ENCODE measurements at regions of chr2 and their contacts with region 1.

Region 1: DNA sequence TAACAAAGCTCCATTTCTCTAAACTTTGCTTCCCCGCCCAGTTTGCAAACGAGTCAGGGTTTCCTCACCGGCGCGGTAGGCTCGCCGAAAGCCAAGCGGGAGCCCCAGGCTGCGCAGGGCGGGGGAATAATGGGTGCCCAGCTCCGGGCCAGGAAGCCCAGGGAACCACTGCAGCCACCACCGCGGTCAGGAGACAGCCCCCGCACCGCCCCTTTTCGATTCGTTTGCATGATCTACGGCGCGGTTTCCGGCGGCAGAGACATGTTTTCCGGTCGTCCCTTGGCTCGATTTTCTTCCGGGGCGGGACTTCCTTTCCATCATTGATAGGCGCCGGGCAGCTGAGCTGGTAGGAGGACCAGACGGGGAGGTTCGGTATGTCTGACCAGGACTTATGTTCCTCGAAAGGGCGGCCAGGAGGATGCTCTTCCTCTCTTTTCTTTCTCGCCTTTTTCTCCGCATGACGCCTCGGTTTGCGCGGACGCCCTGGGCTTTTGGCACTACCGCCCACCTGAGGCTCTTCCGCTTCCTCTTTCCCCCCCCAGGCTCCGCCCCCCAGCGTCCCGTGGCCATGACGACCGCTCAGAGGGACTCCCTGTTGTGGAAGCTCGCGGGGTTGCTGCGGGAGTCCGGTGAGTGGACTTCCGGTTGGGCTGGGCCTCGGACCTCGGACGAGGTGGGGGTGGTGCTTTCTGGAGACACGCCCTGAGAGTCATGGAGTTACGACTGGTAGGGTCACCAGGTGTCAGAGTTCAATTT is at the start of gene STK11IP:
- DNase-seq: peak; percentile 96 to 98 (median 97)
- ATAC-seq: peak; percentile 97 to 99 (median 98)
- H3K4me3 ChIP-seq: peak within 1 kb of the TSS; percentile 33 to 80 (median 68)
- H3K27ac ChIP-seq: peak within 1 kb of the TSS; percentile 85 to 97 (median 94)
- H3K4me1 ChIP-seq: peaks cover 0 to 20% (median 13%) of the 10 kb centered on the region in 12 donors
- H3K27me3 ChIP-seq: no peaks in the 10 kb centered on the region
- CTCF ChIP-seq: no peak
- POLR2A ChIP-seq: peak in 1 of 2 donors; percentile 72
- total RNA-seq, gene STK11IP: 7.3 to 24.1 (median 13.9) TPM

Region 2: DNA sequence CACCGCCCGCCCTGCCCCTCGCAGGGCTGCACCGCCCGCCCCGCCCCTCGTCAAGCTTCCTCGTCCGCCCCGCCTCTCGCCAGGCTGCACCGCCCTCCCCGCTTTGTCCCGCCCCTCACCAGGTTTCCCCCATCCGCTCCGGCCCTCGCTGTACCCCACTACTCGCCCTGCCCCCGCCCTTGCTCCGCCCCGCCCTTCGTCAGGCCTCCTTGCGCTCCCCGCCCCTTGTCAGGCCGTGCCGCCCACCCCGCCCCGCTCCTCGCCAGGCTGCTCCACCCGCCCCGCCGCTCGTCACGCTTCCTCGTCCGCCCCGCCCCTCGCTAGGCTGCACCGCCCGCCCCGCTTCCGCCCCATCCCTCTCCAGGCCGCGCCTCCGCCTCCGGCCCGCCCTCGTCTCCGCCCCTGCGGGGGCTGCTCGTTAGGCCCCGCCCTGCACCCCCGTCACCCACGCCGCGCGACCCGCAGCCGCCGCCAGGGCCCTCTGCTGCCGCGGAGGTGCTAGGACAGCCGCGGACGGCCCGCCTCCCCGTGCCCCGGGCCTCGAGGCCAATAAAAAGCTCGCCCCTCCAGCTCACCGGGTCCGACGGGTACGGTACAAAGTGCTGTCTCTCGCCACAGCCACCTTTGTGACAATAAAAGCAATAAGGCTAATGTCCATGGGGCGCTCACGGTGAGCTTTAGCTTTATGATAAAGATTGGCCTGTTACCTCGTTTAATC is 209.4 kb before region 1 on chr2:
- intact Hi-C with region 1: loop called in 1 of 10 experiments (anchors 5 kb)
- DNase-seq: peak; percentile 99 to 100 (median 99)
- ATAC-seq: peak; percentile 83 to 92 (median 88)
- H3K4me3 ChIP-seq: peak overlapping the region in 10 of 12 donors; percentile 20 to 95 (median 78)
- H3K27ac ChIP-seq: peak overlapping the region; percentile 77 to 99 (median 89)
- H3K4me1 ChIP-seq: peaks cover 0 to 19% (median 11%) of the 10 kb centered on the region in 12 donors
- H3K27me3 ChIP-seq: no peaks in the 10 kb centered on the region
- CTCF ChIP-seq: peak; percentile 40 to 87 (median 74)
- POLR2A ChIP-seq: peak in 1 of 2 donors; percentile 40

Region 3: DNA sequence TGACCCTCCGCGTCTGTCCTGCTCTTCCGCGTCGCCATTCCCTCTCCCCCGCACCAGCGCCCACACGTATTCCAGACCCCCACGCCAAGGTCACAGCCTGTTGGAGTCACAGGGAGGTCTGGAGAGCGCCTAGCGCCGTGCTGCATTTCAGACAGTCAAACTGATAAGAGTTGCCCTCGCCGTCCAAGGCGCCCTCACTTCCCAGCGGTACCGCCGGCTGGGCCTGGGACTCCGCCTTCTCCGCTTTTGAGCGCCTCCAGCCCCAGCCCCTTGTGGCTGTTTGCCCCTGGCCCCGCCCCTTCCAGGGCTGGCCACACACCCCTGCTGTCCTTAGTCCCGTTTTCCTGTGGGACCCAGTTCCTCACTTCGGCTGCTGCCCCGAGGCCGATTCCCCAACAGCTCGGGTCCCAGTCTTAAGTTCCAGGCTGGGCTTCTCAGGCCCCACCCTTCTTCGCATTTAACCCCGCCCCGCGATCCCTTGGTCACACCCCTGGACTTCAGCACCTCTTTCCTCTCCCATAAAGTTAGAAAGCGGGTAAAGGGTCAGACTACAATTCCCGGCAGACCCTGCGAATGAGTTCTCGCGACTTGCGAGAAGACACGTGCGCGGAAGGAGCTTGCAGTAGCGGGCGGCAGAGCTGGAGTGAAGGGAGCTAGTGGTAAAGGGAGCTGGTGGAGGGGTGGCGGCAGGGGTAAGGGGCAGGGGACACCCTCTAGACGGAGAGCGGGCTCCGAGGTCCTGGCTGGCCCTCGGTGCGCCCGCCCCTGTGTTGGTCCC is 99.3 kb before region 1 on chr2 and contains the start of gene GMPPA:
- intact Hi-C with region 1: loop called in 1 of 10 experiments (anchors 1 kb)
- DNase-seq: peak; percentile 96 to 98 (median 96)
- ATAC-seq: peak; percentile 86 to 94 (median 88)
- H3K4me3 ChIP-seq: peak within 1 kb of the TSS; percentile 38 to 89 (median 78)
- H3K27ac ChIP-seq: peak within 1 kb of the TSS; percentile 94 to 100 (median 98)
- H3K4me1 ChIP-seq: peaks cover 0 to 50% (median 35%) of the 10 kb centered on the region in 12 donors
- H3K27me3 ChIP-seq: peaks cover 0 to 37% (median 0%) of the 10 kb centered on the region in 9 donors
- CTCF ChIP-seq: peak in 1 of 12 donors; percentile 31
- POLR2A ChIP-seq: peak in 1 of 2 donors; percentile 61
- total RNA-seq, gene GMPPA: 15.8 to 31.6 (median 20.1) TPM

Region 4: DNA sequence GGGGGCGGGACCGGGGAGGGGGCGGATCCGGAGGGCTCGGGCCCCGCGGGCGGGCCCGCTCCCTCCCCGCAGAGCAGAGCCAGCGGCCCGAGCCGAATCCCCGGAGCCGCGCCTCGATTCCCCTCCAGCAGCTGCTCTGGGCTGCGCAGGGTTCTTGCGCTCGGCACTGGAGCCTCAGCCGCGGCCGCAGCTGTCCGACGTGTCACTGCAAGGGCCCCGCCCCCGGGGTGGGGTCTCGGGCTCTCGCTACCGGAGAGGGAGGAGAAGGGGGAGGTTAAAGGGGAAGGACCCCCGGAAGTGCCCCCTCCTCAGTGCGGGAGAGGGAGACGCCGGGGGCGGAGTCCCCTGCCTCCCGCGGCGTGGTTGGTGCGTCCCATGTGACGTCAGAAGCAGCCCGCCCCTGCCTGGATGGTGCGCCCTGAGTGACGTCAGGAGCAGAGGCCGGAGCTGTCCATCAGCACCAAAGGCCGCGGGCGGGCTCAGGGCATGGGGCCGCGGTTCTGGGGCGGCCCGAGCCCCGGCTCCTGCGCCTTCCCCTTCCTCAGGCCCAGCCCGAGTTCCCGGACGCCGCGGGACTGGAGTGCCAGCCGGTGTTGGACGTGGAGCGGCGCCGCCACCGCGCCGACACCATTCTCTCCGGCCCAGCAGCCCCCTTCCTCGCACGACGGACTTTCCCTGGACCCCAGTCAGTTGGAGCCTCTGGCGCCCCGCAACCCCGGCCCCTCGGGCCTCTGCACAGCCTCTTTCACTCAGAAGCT is 54.0 kb before region 1 on chr2 and contains the starts of genes CHPF and TMEM198:
- intact Hi-C with region 1: loop called in 3 of 10 experiments (anchors 1 to 5 kb)
- DNase-seq: peak; percentile 97 to 99 (median 98)
- ATAC-seq: peak; percentile 92 to 95 (median 93)
- H3K4me3 ChIP-seq: peak within 1 kb of the TSS; percentile 46 to 92 (median 73)
- H3K27ac ChIP-seq: peak within 1 kb of the TSS; percentile 43 to 97 (median 88)
- H3K4me1 ChIP-seq: peaks cover 0 to 35% (median 25%) of the 10 kb centered on the region in 12 donors
- H3K27me3 ChIP-seq: peaks cover 0 to 21% (median 0%) of the 10 kb centered on the region in 9 donors
- CTCF ChIP-seq: no peak
- POLR2A ChIP-seq: peak in 1 of 2 donors; percentile 75
- total RNA-seq, gene CHPF: 77.9 to 196 (median 138) TPM
- total RNA-seq, gene TMEM198: 0.65 to 4.7 (median 2.3) TPM

Region 5: DNA sequence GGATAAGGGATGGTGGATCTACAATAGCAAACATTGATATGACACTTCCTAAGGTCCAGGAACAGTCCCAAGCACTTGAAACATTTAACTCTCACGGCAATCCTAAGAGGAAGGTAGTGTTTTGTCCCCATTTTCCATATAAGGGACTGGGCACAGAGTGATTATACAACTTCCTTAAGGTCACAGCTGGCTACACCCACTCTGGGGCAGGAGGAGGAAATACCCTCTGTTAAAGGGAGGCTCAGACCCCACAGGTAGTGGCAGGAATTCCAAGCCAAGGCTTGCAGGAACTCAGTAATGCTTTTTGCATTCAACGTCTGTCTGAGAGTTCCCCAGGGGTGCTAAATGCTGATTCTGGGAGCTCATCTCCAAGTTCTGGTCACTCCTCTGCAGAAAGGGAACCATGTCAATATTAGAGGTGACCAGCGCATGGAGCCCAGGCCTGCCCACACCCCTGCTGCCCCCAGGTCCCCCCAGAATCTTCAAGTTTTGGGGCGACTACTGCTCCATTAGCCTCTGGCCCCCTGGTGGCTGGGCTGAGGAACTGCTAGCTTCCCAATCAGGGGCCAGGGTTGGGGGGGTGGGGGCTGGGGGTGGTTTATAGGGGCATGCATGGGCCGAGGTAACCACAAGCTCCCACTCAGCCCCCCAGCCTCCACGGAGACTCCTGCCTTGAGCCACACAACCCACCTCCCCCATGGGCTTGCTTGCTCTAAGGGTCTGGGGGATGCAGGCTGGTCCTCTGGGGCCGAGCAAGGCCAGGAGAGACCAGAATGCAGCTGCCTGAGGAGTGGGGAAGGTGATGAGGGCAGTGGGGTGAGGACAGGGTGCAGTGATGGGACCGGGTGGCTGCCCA is 37.5 kb before region 1 on chr2:
- intact Hi-C with region 1: loop called in 2 of 10 experiments (anchors 5 to 10 kb)
- DNase-seq: peak in 1 of 5 donors; percentile 17
- ATAC-seq: peak in 2 of 4 donors; percentile 5 to 23
- H3K4me3 ChIP-seq: no peak overlapping the region
- H3K27ac ChIP-seq: peak overlapping the region in 1 of 12 donors; percentile 14
- H3K4me1 ChIP-seq: peaks cover 0 to 27% (median 7%) of the 10 kb centered on the region in 12 donors
- H3K27me3 ChIP-seq: no peaks in the 10 kb centered on the region
- CTCF ChIP-seq: peak; percentile 54 to 80 (median 70)
- POLR2A ChIP-seq: no peak

Region 6: DNA sequence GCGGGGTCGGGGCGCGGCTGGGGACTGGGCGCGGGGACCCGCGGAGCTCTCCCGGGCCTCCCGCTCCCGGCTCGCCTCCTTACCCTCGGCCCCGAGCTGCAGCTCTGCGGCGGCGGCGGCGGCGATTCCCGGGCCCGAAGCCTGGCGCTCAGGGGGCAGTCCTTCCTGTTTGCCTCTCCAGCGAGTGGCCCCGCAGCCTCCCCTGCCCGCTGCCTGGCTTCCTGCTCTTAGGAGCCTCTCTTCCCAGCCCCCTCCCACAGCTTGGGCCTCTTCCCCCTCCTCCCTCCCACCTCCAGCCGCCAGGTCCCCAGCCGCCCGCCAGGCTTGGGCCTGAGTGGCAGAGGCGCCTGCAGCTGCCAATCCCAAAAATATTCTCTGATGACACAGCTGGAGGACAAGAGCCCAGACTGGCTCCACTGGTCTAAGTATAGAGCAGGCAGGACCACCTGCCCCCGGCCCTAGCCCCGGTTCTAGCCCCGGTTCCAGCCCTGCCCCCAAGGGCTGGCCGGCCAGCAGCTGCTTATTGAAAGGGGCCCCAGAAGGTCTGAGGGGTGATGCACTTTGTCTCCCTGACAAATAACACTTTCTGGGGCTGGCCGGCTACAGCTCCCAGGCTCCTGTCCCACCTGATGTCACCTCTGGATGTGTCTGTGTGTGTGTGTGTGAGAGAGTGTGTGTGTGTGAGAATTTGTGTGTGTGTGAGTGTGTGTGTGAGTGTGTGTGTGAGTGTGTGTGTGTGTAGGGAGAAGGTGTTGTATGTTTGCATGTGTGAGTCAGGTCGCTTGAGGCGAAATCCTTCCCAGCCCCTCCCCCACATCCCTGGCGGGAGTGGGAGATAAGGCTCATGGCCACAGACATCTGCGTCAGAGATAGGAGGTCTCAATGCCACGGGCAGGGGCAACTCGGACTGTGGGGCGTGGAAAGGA is 26.2 kb before region 1 on chr2 and contains the start of gene OBSL1:
- intact Hi-C with region 1: loop called in 2 of 10 experiments (anchors 1 to 2 kb)
- DNase-seq: peak; percentile 83 to 93 (median 91)
- ATAC-seq: peak; percentile 83 to 91 (median 84)
- H3K4me3 ChIP-seq: peak within 1 kb of the TSS; percentile 50 to 92 (median 68)
- H3K27ac ChIP-seq: peak within 1 kb of the TSS; percentile 71 to 96 (median 90)
- H3K4me1 ChIP-seq: peaks cover 0 to 33% (median 10%) of the 10 kb centered on the region in 12 donors
- H3K27me3 ChIP-seq: peaks cover 0 to 30% (median 0%) of the 10 kb centered on the region in 9 donors
- CTCF ChIP-seq: peak in 1 of 12 donors; percentile 15
- POLR2A ChIP-seq: peak in 1 of 2 donors; percentile 39
- total RNA-seq, gene OBSL1: 149 to 230 (median 178) TPM

Region 7: DNA sequence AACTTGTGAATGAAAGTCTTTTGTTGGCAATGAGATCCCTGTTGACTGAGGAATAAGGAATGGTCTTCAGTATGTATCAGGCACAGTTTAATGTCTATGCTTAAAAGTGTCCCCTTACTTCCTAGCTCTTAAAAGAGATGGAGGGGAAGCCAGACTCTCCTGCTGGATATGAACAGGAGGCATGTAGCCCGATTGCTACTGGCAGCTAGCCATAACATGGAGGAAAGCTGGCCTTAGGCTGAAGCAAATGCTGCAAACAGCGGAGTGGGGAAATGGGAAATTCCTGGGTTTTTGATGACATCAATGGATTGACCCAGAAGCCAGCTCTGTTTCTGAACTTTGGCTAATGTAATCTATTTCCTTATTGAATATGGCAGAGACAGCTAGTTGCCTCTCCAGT is 295.8 kb after region 1 on chr2:
- intact Hi-C with region 1: no loop called
- DNase-seq: no peak
- ATAC-seq: no peak
- H3K4me3 ChIP-seq: no peak overlapping the region
- H3K27ac ChIP-seq: no peak overlapping the region
- H3K4me1 ChIP-seq: peaks cover 0 to 4% (median 0%) of the 10 kb centered on the region in 12 donors
- H3K27me3 ChIP-seq: no peaks in the 10 kb centered on the region
- CTCF ChIP-seq: no peak
- POLR2A ChIP-seq: no peak